ENCODE measurements at regions of chr4 and their contacts with region 1.

Region 1: DNA sequence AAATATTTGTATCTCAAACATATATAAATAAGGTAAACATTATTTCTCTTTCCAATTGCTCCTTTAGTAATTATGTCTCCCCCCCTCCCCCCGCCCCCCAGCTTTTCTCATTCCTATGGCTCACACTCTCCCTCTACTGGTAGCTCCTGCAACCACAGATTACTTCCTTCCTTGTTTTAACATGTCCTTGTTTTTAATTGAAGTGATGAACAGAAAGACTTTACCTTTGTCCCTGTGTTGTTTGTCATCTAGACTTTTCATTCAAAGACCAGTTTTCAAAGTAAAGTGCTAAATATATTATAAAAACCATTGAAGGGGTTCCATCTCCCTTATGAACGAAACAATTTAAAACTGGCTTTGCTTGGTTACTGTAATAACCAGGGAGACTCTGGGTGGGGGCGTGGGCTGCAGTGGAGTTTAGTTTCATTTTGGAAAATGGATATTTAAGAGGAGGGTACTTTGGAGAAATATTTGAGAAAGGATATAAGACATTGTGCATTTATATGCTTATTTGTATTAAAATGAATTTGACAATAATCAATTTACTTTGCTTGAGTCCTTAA is 352.9 kb downstream of the RAPGEF2 start:
- DNase-seq: peak; percentile 68
- H3K4me3 ChIP-seq: peak overlapping the region in 1 of 2 experiments; percentile 27; a peak in 1 of 4 replicates
- H3K27ac ChIP-seq: no peak overlapping the region
- H3K4me1 ChIP-seq: no peaks in the 10 kb centered on the region
- H3K27me3 ChIP-seq: no peaks in the 10 kb centered on the region
- CTCF ChIP-seq: peak; percentile 80
- EP300 ChIP-seq: no peak
- RAD21 ChIP-seq: peak; percentile 49

Region 2: GRCh38 chr4:159137176-159137575 is 318.6 kb before region 1 on chr4:
- CTCF ChIA-PET with region 1: no interaction called
- POLR2A ChIA-PET with region 1: no interaction called
- DNase-seq: no peak
- H3K4me3 ChIP-seq: no peak overlapping the region
- H3K27ac ChIP-seq: no peak overlapping the region
- H3K4me1 ChIP-seq: peaks cover 0 to 2% of the 10 kb centered on the region in 2 experiments; a peak in 1 of 4 replicates
- H3K27me3 ChIP-seq: no peaks in the 10 kb centered on the region
- CTCF ChIP-seq: no peak
- EP300 ChIP-seq: no peak
- RAD21 ChIP-seq: no peak

Region 3: GRCh38 chr4:159444678-159445077 is 11.1 kb before region 1 on chr4:
- CTCF ChIA-PET with region 1: interaction called, 10 read pairs
- POLR2A ChIA-PET with region 1: no interaction called
- DNase-seq: no peak
- H3K4me3 ChIP-seq: no peak overlapping the region
- H3K27ac ChIP-seq: no peak overlapping the region
- H3K4me1 ChIP-seq: no peaks in the 10 kb centered on the region
- H3K27me3 ChIP-seq: no peaks in the 10 kb centered on the region
- CTCF ChIP-seq: peak; percentile 26; the same call in 1 of the 2 replicates
- EP300 ChIP-seq: no peak
- RAD21 ChIP-seq: no peak